Left ventricle myocardium superior (tissue), 1 donor: ENCODE measurements at regions of chr10 and their contacts with region 1.

Region 1: GRCh38 chr10:31318854-31319601 is at the start of gene ZEB1:
- DNase-seq: peak; percentile 86
- ATAC-seq: peak; percentile 81
- total RNA-seq, gene ZEB1: 86.7 TPM

Region 2: DNA sequence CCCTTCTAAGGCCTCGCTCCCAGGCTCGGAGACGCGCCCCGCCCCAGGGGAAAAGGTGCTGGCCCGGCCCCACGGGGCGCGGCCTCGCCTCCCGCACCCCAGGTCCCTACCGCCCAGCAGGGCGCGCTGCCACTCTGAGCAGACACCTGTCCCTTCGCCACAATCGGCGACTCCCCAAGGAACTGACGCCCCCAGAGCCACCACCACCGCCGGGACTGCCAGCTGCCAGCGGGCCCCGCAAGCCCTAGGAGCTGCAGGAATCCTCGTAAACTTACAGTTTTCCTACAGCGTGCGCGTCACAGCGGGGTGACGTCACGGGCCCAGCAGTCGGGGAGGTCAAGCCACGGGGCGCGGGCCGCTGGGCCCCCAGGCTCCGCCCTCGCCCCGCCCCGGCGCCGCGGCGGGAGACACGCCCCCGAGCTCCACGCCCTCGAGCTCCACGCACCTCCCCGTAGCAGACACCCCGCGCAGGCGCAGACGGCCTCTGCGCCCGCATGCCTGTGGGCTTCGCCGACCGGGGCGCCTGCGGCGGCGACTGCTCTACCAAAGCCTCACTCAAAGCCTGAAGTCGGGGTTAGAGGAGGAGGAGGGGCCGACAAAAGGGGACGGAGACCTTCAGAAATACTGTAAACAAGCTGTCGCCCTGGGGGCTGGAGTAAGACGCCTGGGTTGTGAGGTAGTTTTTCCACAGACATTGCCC is 287.3 kb before region 1 on chr10 and contains the start of gene ZNF438:
- intact Hi-C with region 1: loop called (anchors 10 kb)
- DNase-seq: peak; percentile 98
- ATAC-seq: peak; percentile 97
- total RNA-seq, gene ZNF438: 13.9 TPM

Region 3: GRCh38 chr10:31083765-31084184 is 235.3 kb before region 1 on chr10:
- intact Hi-C with region 1: no loop called
- DNase-seq: peak; percentile 35
- ATAC-seq: peak; percentile 55

Region 4: DNA sequence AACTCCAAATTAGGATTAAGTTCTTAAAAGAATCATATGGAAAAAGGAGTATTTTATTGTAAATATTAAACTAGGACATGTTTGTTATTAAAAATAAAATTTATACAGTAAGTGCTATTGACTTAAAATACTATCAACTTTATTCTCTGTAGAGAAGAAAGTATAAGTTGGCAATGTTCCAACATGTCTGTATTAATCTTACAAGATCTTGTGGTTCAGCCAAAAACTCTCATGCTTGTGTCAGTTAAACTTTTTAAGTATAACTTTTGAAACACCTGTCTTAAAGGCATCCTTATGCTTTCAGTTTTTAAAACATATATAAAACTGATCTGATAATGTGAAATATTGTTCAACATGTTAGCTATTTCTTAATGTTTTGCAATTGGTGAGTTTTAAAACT is 160.7 kb after region 1 on chr10:
- intact Hi-C with region 1: loop called (anchors 10 kb)
- DNase-seq: no peak
- ATAC-seq: no peak

Region 5: GRCh38 chr10:31508882-31509281 is 189.9 kb after region 1 on chr10:
- intact Hi-C with region 1: no loop called
- DNase-seq: no peak
- ATAC-seq: no peak